Gastrocnemius medialis (tissue), 4 donors: ENCODE measurements at regions of chr2 and their contacts with region 1.

Region 1: GRCh38 chr2:134118279-134119116 is 135.4 kb upstream of the MGAT5 start:
- DNase-seq: peak; percentile 76 to 78
- ATAC-seq: peak; percentile 72 to 75
- H3K4me3 ChIP-seq: peak overlapping the region in 2 of 4 donors; percentile 9 to 27
- H3K27ac ChIP-seq: peak overlapping the region; percentile 47 to 79 (median 54)
- H3K4me1 ChIP-seq: peaks cover 8 to 15% of the 10 kb centered on the region in 2 donors
- H3K27me3 ChIP-seq: no peaks in the 10 kb centered on the region
- CTCF ChIP-seq: peak; percentile 62 to 82 (median 71)
- POLR2A ChIP-seq: no peak

Region 2: GRCh38 chr2:133821107-133821760 is 297.3 kb before region 1 on chr2:
- in situ Hi-C with region 1: no loop called
- intact Hi-C with region 1: no loop called
- DNase-seq: no peak
- ATAC-seq: no peak
- H3K4me3 ChIP-seq: no peak overlapping the region
- H3K27ac ChIP-seq: no peak overlapping the region
- H3K4me1 ChIP-seq: no peaks in the 10 kb centered on the region
- H3K27me3 ChIP-seq: no peaks in the 10 kb centered on the region
- CTCF ChIP-seq: no peak
- POLR2A ChIP-seq: no peak

Region 3: GRCh38 chr2:133886735-133887660 is 231.5 kb before region 1 on chr2:
- in situ Hi-C with region 1: loop called in 1 of 4 experiments (anchors 25 kb)
- intact Hi-C with region 1: no loop called
- DNase-seq: peak; percentile 29 to 35
- ATAC-seq: peak; percentile 69 to 76
- H3K4me3 ChIP-seq: no peak overlapping the region
- H3K27ac ChIP-seq: no peak overlapping the region
- H3K4me1 ChIP-seq: no peaks in the 10 kb centered on the region
- H3K27me3 ChIP-seq: no peaks in the 10 kb centered on the region
- CTCF ChIP-seq: peak in 2 of 5 experiments; percentile 52
- POLR2A ChIP-seq: no peak

Region 4: GRCh38 chr2:133993160-133993559 is 125.3 kb before region 1 on chr2:
- in situ Hi-C with region 1: no loop called
- intact Hi-C with region 1: no loop called
- DNase-seq: peak in 1 of 2 donors; percentile 21
- ATAC-seq: peak; percentile 30 to 60
- H3K4me3 ChIP-seq: no peak overlapping the region
- H3K27ac ChIP-seq: no peak overlapping the region
- H3K4me1 ChIP-seq: peaks cover 0 to 7% of the 10 kb centered on the region in 2 donors
- H3K27me3 ChIP-seq: no peaks in the 10 kb centered on the region
- CTCF ChIP-seq: no peak
- POLR2A ChIP-seq: no peak

Region 5: DNA sequence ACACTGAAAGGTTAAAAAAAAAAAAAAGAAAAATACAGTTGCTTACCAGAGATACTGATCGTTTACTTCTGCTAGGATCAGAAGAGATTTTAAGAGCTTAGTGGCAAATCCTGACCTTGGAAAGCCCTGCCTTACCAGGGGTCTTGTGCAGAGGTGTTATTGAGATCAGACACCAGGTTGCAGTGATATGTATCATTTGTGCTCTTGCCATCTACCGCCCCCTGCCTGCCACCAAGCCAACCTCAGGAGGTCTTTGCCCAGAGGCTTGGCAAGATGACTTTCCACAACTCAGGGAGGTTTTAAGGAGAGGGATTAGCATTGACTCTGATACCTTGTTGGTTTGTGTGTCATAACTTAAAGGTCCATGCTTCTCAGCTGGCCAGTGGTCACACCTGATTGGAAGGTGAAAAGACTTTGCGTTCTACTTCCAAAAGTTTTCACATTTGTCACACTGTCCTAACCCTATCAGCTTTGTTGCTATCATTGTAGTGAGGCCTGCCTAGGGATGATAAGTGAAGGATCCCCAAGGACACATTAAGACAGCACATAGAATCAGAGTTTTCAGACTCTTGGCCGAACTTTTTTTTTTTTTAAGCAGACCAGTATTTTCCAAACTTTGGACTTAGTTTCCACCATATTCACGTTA is 89.2 kb after region 1 on chr2:
- in situ Hi-C with region 1: no loop called
- intact Hi-C with region 1: loop called (anchors 5 kb)
- DNase-seq: no peak
- ATAC-seq: no peak
- H3K4me3 ChIP-seq: no peak overlapping the region
- H3K27ac ChIP-seq: no peak overlapping the region
- H3K4me1 ChIP-seq: peaks cover 4 to 8% of the 10 kb centered on the region in 2 donors
- H3K27me3 ChIP-seq: no peaks in the 10 kb centered on the region
- CTCF ChIP-seq: peak in 4 of 5 experiments; percentile 37 to 60 (median 56)
- POLR2A ChIP-seq: no peak

Region 6: GRCh38 chr2:134217924-134218323 is 99.4 kb after region 1 on chr2:
- in situ Hi-C with region 1: no loop called
- intact Hi-C with region 1: no loop called
- DNase-seq: no peak
- ATAC-seq: no peak
- H3K4me3 ChIP-seq: no peak overlapping the region
- H3K27ac ChIP-seq: no peak overlapping the region
- H3K4me1 ChIP-seq: peaks cover 0 to 7% of the 10 kb centered on the region in 2 donors
- H3K27me3 ChIP-seq: no peaks in the 10 kb centered on the region
- CTCF ChIP-seq: no peak
- POLR2A ChIP-seq: no peak

Region 7: GRCh38 chr2:134245340-134245984 is 127.0 kb after region 1 on chr2:
- in situ Hi-C with region 1: loop called in 2 of 4 experiments (anchors 5 kb)
- intact Hi-C with region 1: loop called (anchors 1 kb)
- DNase-seq: peak; percentile 49 to 58
- ATAC-seq: peak; percentile 24 to 47
- H3K4me3 ChIP-seq: no peak overlapping the region
- H3K27ac ChIP-seq: no peak overlapping the region
- H3K4me1 ChIP-seq: peaks cover 2 to 6% of the 10 kb centered on the region in 2 donors
- H3K27me3 ChIP-seq: no peaks in the 10 kb centered on the region
- CTCF ChIP-seq: peak; percentile 40 to 73 (median 63)
- POLR2A ChIP-seq: no peak

Region 8: GRCh38 chr2:134918526-134919340 is 800.2 kb after region 1 on chr2 and contains the start of gene CCNT2:
- in situ Hi-C with region 1: loop called in 1 of 4 experiments (anchors 25 kb)
- intact Hi-C with region 1: no loop called
- DNase-seq: peak; percentile 97 to 99
- ATAC-seq: peak; percentile 86 to 89
- H3K4me3 ChIP-seq: peak within 1 kb of the TSS; percentile 96 to 99 (median 96)
- H3K27ac ChIP-seq: peak within 1 kb of the TSS; percentile 99 to 100 (median 100)
- H3K4me1 ChIP-seq: peaks cover 41 to 45% of the 10 kb centered on the region in 2 donors
- H3K27me3 ChIP-seq: no peaks in the 10 kb centered on the region
- CTCF ChIP-seq: peak in 3 of 5 experiments; percentile 22 to 34 (median 22)
- POLR2A ChIP-seq: peak; percentile 17 to 44
- total RNA-seq, gene CCNT2: 11.6 to 28.4 (median 18.6) TPM